A549 (cell line): ENCODE measurements at regions of chr20 and their contacts with region 1.

Region 1: GRCh38 chr20:22700367-22700766 is 116.0 kb upstream of the FOXA2 start:
- DNase-seq: no peak
- ATAC-seq: no peak; a peak in 1 of 6 replicates
- H3K4me3 ChIP-seq: no peak overlapping the region
- H3K27ac ChIP-seq: peak overlapping the region; percentile 17 to 54
- H3K4me1 ChIP-seq: peaks cover 14% of the 10 kb centered on the region; the same call in 2 of the 3 replicates
- CTCF ChIP-seq: no peak
- EP300 ChIP-seq: no peak
- POLR2A ChIP-seq: no peak
- RAD21 ChIP-seq: no peak

Region 2: GRCh38 chr20:22366631-22367030 is 333.7 kb before region 1 on chr20:
- CTCF ChIA-PET with region 1: no interaction called
- POLR2A ChIA-PET with region 1: no interaction called
- DNase-seq: no peak
- ATAC-seq: no peak
- H3K4me3 ChIP-seq: no peak overlapping the region
- H3K27ac ChIP-seq: no peak overlapping the region
- H3K4me1 ChIP-seq: no peaks in the 10 kb centered on the region
- CTCF ChIP-seq: no peak
- EP300 ChIP-seq: no peak
- POLR2A ChIP-seq: no peak
- RAD21 ChIP-seq: no peak

Region 3: DNA sequence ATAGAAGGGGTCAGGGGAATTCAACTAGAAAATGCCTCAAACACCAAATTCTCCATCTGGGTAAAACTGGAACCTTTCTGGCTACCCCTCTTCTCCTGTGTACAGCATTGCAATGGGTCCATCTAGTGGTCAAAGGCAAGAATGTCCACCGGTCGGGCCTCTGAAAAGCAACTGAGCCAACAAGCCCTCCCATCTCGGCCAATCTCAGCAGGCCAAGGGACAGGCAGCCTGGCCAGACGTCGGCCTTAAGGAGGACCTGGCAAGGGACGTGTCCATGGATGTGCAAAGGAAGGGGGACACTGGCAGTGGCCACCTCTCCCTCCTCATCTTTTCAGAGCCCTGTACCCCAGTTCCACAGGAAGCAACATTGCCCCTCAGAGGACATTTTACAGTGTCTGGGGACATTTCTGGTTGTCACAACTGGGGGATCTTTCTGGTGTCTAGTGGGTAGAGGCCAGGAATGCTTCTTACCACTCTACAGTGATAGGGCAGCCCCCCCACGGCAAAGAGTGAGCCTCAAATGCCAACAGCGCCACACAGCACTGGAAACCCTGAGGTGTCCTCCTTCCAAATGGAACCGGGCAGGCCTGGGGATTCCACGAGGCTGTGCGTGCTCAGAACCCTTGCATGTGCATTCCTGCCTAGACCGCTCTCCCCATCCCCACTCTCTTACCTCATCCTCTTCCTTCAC is 16.1 kb before region 1 on chr20:
- CTCF ChIA-PET with region 1: interaction called, 355 read pairs
- POLR2A ChIA-PET with region 1: no interaction called
- DNase-seq: peak; percentile 71 to 85
- ATAC-seq: peak; percentile 76 to 92
- H3K4me3 ChIP-seq: no peak overlapping the region
- H3K27ac ChIP-seq: peak overlapping the region; percentile 41 to 66; a peak in 5 of 6 replicates
- H3K4me1 ChIP-seq: peaks cover 30% of the 10 kb centered on the region
- CTCF ChIP-seq: peak; percentile 98
- EP300 ChIP-seq: no peak
- POLR2A ChIP-seq: no peak
- RAD21 ChIP-seq: peak; percentile 100